ENCODE measurements at regions of chr13 and their contacts with region 1.

Region 1: DNA sequence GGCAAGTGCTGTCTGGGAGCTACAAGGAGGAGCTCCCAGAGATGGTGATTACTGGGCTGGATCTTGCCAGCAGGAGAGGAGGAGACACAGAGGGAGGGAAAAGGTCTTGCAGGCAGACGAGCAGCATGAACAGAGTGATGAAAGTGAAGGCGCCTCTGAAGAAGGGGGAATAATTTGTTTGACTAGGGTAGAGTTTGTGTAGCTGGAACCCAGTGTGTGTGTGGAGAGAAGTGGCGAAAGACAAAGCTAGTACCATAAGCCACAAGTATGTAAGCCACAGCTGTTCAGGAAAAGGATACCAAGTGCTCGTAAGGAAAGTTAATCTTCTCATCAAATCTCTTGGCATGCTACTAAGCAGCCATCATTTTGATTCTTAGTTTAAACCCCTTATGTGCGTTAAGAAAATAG is 5.4 kb downstream of the FLT1 start:
- DNase-seq: peak; percentile 55
- H3K4me3 ChIP-seq: no peak overlapping the region
- H3K27ac ChIP-seq: peak overlapping the region; percentile 76
- H3K4me1 ChIP-seq: peaks cover 46% of the 10 kb centered on the region
- H3K27me3 ChIP-seq: no peaks in the 10 kb centered on the region
- CTCF ChIP-seq: no peak
- POLR2A ChIP-seq: no peak

Region 2: GRCh38 chr13:28440774-28441417 is 48.6 kb before region 1 on chr13:
- CTCF ChIA-PET with region 1: no interaction called
- POLR2A ChIA-PET with region 1: no interaction called
- dilution Hi-C with region 1: no loop called
- intact Hi-C with region 1: loop called (anchors 2 kb)
- DNase-seq: peak; percentile 65
- H3K4me3 ChIP-seq: no peak overlapping the region
- H3K27ac ChIP-seq: peak overlapping the region; percentile 4
- H3K4me1 ChIP-seq: peaks cover 23% of the 10 kb centered on the region
- H3K27me3 ChIP-seq: no peaks in the 10 kb centered on the region
- CTCF ChIP-seq: no peak
- POLR2A ChIP-seq: no peak

Region 3: GRCh38 chr13:28468023-28468915 is 21.3 kb before region 1 on chr13:
- CTCF ChIA-PET with region 1: interaction called, 4 read pairs
- POLR2A ChIA-PET with region 1: no interaction called
- dilution Hi-C with region 1: no loop called
- intact Hi-C with region 1: loop called (anchors 1 kb)
- DNase-seq: no peak
- H3K4me3 ChIP-seq: no peak overlapping the region
- H3K27ac ChIP-seq: no peak overlapping the region
- H3K4me1 ChIP-seq: peaks cover 57% of the 10 kb centered on the region
- H3K27me3 ChIP-seq: no peaks in the 10 kb centered on the region
- CTCF ChIP-seq: no peak
- POLR2A ChIP-seq: no peak

Region 4: DNA sequence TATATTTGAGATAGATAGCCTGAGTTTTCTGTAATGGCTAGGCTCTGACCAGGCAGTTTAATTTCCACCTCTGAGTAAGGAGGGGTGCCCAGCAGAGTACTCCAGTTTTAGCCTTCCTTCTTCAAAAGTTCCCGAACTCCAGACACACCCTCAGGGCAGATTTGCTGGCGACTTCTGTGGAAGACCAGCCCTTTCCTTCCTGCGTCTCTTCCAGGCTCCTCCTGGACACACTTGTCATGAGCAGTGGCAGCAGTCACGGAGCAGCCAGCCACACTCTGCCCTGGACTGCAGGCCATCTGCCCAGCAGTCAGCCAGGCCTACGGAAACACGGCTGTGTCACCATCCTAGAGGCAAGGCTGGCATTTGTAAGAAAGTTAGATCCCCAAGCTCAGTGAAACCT is 12.0 kb after region 1 on chr13:
- CTCF ChIA-PET with region 1: no interaction called
- POLR2A ChIA-PET with region 1: no interaction called
- dilution Hi-C with region 1: no loop called
- intact Hi-C with region 1: loop called (anchors 1 kb)
- DNase-seq: no peak
- H3K4me3 ChIP-seq: no peak overlapping the region
- H3K27ac ChIP-seq: no peak overlapping the region
- H3K4me1 ChIP-seq: peaks cover 7% of the 10 kb centered on the region
- H3K27me3 ChIP-seq: no peaks in the 10 kb centered on the region
- CTCF ChIP-seq: no peak
- POLR2A ChIP-seq: no peak